ENCODE measurements at regions of chr7 and their contacts with region 1.

Region 1: DNA sequence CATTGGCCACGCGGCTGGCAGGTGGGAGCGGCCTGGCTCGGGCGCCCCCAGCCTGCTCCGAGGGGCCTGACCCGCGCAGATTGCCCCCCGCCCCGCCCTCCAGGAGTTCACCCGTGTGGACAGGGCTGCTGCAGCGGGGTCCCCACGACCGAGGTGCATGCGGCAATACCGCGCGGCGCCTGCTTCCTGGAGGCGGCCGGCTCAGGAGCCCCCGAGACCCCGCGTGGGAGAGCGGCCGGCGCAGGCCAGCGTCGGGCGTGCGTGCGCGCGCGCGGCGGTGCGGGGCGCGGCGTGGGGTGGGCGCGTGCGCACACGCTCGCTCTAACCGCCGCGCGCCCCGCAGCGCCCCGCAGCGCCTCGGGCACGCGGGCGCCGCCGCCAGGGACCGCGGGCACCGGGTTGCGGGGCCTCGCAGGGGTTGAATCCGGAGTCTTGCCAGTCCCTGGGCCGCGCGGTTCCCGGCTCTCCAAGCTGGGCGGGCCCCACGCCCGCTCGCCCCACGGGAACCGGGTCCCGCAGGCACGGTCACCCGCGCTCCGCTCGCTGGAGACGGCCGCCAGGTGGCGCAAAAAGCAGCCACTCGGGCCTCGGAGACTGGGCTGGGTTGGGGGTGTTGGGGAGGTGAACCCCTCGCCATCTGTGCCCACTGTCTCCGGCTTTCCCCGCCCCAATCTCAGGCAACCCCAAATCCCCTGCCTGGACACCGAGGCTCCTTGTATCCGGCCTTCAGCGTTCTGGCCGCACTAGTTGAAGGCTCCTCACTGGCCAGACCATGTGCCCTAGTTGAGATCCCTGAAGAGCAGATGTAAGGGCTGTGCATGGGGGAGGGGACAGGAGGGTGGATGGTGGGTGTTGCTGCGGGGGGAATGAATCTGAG is 1.3 kb upstream of the ACHE start:
- DNase-seq: no peak
- H3K4me3 ChIP-seq: no peak overlapping the region
- H3K27ac ChIP-seq: no peak overlapping the region
- H3K4me1 ChIP-seq: peaks cover 9% of the 10 kb centered on the region
- H3K27me3 ChIP-seq: peaks cover 15% of the 10 kb centered on the region
- CTCF ChIP-seq: peak; percentile 44 to 75

Region 2: DNA sequence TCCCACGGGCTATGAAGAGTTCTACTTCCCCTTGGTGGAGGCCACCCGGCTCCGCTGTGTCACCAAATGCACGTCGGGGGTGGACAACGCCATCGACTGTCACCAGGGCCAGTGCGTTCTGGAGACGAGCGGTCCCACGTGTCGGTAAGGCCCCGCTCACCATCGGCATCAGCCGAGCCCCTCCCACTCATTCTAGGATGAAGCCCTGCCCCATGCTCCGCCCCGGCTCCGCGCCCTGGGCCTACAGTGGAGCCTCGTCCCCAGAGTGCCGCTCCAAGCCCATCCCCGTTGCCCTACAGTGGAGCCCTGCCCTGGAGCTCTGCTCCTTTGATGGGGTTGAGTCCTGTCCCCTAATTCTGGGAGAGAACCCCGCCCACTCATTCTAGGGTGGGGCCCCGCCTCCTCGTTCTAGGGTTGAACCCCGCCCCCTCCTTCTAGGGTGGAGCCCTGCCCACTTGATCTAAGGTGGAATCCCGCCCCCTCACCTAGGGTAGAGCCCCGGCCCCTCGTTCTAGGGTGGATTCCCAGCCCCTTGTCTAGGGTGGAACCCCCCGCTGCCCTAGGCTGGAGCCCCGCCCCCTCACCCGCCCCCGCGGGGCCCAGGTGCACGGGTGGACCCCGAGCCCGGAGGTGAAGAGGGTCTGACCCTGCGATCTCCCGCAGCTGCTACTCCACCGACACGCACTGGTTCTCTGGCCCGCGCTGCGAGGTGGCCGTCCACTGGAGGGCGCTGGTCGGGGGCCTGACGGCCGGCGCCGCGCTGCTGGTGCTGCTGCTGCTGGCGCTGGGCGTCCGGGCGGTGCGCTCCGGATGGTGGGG is 69.0 kb after region 1 on chr7:
- CTCF ChIA-PET with region 1: no interaction called
- dilution Hi-C with region 1: no loop called
- in situ Hi-C with region 1: no loop called
- intact Hi-C with region 1: loop called (anchors 1 kb)
- DNase-seq: peak; percentile 74
- H3K4me3 ChIP-seq: peak overlapping the region in 2 of 3 experiments; percentile 23 to 34
- H3K27ac ChIP-seq: no peak overlapping the region
- H3K4me1 ChIP-seq: peaks cover 7% of the 10 kb centered on the region
- H3K27me3 ChIP-seq: peaks cover 17% of the 10 kb centered on the region
- CTCF ChIP-seq: peak; percentile 82 to 86

Region 3: GRCh38 chr7:101031082-101031481 is 134.1 kb after region 1 on chr7:
- CTCF ChIA-PET with region 1: no interaction called
- dilution Hi-C with region 1: no loop called
- in situ Hi-C with region 1: no loop called
- intact Hi-C with region 1: loop called (anchors 1 kb)
- DNase-seq: peak; percentile 8
- H3K4me3 ChIP-seq: no peak overlapping the region
- H3K27ac ChIP-seq: no peak overlapping the region
- H3K4me1 ChIP-seq: no peaks in the 10 kb centered on the region
- H3K27me3 ChIP-seq: peaks cover 3% of the 10 kb centered on the region
- CTCF ChIP-seq: peak in 1 of 2 donors; percentile 39

Region 4: GRCh38 chr7:101077303-101078089 is 180.5 kb after region 1 on chr7:
- CTCF ChIA-PET with region 1: no interaction called
- dilution Hi-C with region 1: no loop called
- in situ Hi-C with region 1: no loop called
- intact Hi-C with region 1: loop called (anchors 1 kb)
- DNase-seq: peak; percentile 82
- H3K4me3 ChIP-seq: no peak overlapping the region
- H3K27ac ChIP-seq: no peak overlapping the region
- H3K4me1 ChIP-seq: no peaks in the 10 kb centered on the region
- H3K27me3 ChIP-seq: peaks cover 2% of the 10 kb centered on the region
- CTCF ChIP-seq: peak; percentile 86 to 98

Region 5: DNA sequence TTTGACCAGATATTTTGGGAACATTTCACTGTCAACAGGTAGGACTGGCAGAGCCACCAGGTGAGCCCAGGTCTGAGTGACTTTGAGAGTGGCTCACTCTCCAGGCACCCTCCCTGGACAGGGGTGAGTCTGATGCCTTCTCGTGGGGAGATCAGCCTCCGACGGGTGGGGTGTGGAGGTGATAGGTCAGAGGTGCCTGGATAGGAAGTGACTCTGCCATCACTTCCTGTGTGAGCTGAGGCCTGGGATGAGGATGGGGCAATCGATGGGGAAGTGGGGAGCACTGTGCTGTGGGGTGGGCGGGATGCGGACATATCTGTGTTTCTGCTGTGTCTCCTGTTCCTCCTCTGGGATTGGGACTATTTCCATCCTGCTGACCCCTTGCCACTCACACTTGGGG is 390.1 kb after region 1 on chr7:
- CTCF ChIA-PET with region 1: no interaction called
- dilution Hi-C with region 1: no loop called
- in situ Hi-C with region 1: loop called in 1 of 2 experiments (anchors 25 kb)
- intact Hi-C with region 1: loop called (anchors 2 kb)
- DNase-seq: no peak
- H3K4me3 ChIP-seq: no peak overlapping the region
- H3K27ac ChIP-seq: no peak overlapping the region
- H3K4me1 ChIP-seq: no peaks in the 10 kb centered on the region
- H3K27me3 ChIP-seq: peaks cover 2% of the 10 kb centered on the region
- CTCF ChIP-seq: no peak